ENCODE measurements at regions of chr16 and their contacts with region 1.

Region 1: DNA sequence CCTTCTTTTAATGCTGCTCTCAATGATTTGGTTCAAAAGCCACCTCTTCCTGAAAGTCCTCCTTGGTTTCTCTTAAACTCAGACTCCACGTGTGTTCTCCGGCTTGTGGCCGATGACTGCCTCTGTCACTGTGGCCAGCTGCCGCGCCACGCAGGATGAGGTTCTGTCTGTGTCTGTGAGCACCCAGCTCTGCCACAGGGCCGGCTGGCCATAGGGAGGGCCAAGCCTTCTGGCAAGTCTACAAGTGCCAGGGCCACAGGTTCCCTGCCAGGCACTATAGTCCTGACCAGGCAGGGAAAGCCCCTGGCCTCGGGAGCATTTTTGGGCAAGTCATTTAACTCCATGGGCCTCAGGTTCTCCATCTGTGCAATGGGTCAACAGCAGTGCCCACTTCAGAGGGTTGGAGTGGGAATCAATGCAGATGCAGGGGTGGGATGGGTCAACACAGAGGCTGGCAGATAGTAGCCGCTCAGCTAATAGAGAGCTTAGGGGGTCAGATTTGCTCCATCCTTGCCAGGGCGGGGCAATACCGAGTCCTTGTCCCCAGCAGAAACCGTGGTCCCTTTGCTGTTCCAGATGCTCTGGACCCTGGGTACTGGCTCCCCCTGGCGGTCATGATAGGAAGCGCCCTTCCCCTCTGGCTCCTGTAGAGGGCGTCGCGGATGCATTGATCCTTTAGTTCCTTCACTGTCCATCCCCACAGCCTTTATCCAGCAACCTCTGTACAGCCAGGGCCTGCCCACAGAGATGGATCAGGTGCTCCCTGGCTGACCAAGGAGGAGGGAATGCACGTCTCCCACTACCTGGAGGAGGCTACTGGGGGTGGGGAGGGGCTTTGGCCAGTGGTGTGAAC is 19.3 kb upstream of the ADGRG3 start:
- DNase-seq: peak; percentile 93
- H3K4me3 ChIP-seq: peak overlapping the region in 1 of 2 experiments; percentile 52; a peak in 1 of 4 replicates
- H3K27ac ChIP-seq: no peak overlapping the region
- H3K4me1 ChIP-seq: peaks cover 0 to 4% of the 10 kb centered on the region in 2 experiments; a peak in 1 of 4 replicates
- H3K27me3 ChIP-seq: no peaks in the 10 kb centered on the region
- CTCF ChIP-seq: peak; percentile 100
- EP300 ChIP-seq: no peak
- RAD21 ChIP-seq: peak; percentile 96

Region 2: DNA sequence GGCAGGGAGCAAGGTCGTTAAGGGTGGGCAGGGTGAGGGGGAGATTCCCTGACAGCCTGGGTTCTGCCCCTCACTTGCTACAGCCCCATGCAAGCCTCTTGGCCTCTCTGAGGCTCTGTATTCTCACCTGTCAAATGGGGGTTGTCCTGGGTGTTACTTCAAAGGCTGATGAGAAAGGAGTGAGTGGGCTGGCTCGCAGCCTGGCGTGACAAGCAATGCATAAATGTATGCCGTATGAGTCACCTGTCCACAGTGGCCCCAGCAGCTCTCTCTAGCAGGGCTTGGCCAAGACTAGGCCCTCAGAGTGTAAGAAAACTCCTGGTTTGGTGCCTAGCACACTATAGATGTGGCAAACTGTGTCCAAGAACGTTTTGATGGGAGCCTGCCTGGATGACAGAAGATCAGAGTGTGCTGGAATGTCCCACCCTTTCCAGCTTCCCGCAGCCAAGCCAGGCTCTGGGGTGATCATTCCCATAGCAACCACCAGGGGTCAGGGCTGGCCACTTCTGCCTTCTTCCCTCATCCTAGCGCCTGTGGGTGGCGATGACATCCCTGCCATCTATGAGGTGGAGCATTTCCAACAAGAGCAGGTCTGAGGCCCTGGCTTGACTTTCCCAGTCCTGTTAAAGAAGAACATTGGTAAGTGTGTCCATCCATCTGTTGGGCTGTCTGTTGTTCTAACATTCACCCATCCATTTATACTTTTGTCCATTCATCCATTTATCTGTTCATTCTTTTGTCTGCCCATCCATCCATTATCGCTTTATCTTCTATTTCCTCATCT is 57.5 kb before region 1 on chr16:
- CTCF ChIA-PET with region 1: interaction called, 95 read pairs
- POLR2A ChIA-PET with region 1: no interaction called
- DNase-seq: peak; percentile 81
- H3K4me3 ChIP-seq: peak overlapping the region in 1 of 2 experiments; percentile 34; a peak in 2 of 4 replicates
- H3K27ac ChIP-seq: peak overlapping the region in 1 of 2 experiments; percentile 55; a peak in 2 of 4 replicates
- H3K4me1 ChIP-seq: peaks cover 0 to 13% of the 10 kb centered on the region in 2 experiments; a peak in 1 of 4 replicates
- H3K27me3 ChIP-seq: no peaks in the 10 kb centered on the region; the same call in 1 of the 2 replicates
- CTCF ChIP-seq: peak; percentile 94
- EP300 ChIP-seq: no peak
- RAD21 ChIP-seq: peak; percentile 85

Region 3: DNA sequence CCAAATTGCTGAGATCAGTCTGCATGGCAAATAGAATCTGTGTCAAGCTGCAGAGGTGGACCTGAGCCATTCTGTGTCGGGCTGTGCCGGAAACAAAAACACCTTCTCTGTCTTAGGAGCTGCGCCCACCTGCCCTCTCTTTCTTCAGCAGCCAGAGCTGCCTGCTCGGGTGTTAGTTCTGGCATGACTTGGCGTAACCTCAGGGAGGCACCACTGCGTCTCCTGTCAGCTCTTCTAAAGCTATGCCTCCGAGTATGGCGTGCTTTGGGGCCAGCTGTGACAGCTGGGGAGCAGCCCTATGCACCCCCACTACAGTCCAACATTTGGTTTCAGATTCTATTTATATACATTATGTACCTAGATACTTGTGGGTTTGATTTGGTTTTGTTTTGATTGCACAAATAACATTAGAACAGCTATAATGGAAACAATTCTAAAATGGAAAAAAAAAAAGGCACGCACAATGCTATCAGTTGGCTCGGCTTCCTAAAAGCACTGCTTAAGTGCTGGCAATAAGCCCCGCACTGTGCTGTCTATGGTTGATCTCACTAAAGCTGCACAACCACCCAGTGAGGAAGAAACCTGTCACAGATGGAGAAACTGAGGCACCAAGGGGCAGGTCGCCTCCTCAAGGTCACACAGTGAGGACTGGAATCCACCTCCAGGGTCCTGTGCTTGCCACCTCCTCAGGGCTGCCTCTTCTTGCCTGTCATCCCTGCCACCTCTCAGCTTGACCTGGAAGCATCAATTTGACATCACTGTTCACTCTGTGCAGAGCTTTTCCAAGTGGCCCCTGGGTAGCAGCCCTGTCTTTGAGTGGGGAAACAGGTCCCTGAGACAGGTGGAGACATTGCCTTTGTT is 39.0 kb before region 1 on chr16:
- CTCF ChIA-PET with region 1: interaction called, 95 read pairs
- POLR2A ChIA-PET with region 1: no interaction called
- DNase-seq: peak; percentile 30
- H3K4me3 ChIP-seq: no peak overlapping the region
- H3K27ac ChIP-seq: no peak overlapping the region
- H3K4me1 ChIP-seq: peaks cover 0 to 21% of the 10 kb centered on the region in 2 experiments; a peak in 2 of 4 replicates
- H3K27me3 ChIP-seq: no peaks in the 10 kb centered on the region
- CTCF ChIP-seq: no peak; the same call in 1 of the 2 replicates
- EP300 ChIP-seq: no peak
- RAD21 ChIP-seq: no peak

Region 4: GRCh38 chr16:57663917-57664661 is 15.3 kb after region 1 on chr16:
- CTCF ChIA-PET with region 1: interaction called, 17 read pairs
- POLR2A ChIA-PET with region 1: no interaction called
- DNase-seq: no peak
- H3K4me3 ChIP-seq: no peak overlapping the region
- H3K27ac ChIP-seq: no peak overlapping the region
- H3K4me1 ChIP-seq: peaks cover 0 to 11% of the 10 kb centered on the region in 2 experiments; a peak in 1 of 4 replicates
- H3K27me3 ChIP-seq: no peaks in the 10 kb centered on the region
- CTCF ChIP-seq: no peak
- EP300 ChIP-seq: no peak
- RAD21 ChIP-seq: no peak